Endothelial cell of umbilical vein (primary cell): ENCODE measurements at regions of chrX and their contacts with region 1.

Region 1: GRCh38 chrX:24395775-24396174 is 35.3 kb downstream of the SUPT20HL1 start:
- DNase-seq: peak; percentile 68
- H3K4me3 ChIP-seq: no peak overlapping the region
- H3K27ac ChIP-seq: no peak overlapping the region
- H3K4me1 ChIP-seq: no peaks in the 10 kb centered on the region
- H3K27me3 ChIP-seq: peaks cover 0 to 4% of the 10 kb centered on the region in 2 experiments
- CTCF ChIP-seq: peak; percentile 43 to 46
- POLR2A ChIP-seq: no peak

Region 2: GRCh38 chrX:24498975-24499374 is 103.2 kb after region 1 on chrX:
- CTCF ChIA-PET with region 1: interaction called, 142 read pairs
- POLR2A ChIA-PET with region 1: no interaction called
- dilution Hi-C with region 1: no loop called
- intact Hi-C with region 1: loop called (anchors 1 kb)
- DNase-seq: peak; percentile 21
- H3K4me3 ChIP-seq: no peak overlapping the region
- H3K27ac ChIP-seq: no peak overlapping the region
- H3K4me1 ChIP-seq: peaks cover 12% of the 10 kb centered on the region
- H3K27me3 ChIP-seq: no peaks in the 10 kb centered on the region
- CTCF ChIP-seq: no peak
- POLR2A ChIP-seq: no peak

Region 3: DNA sequence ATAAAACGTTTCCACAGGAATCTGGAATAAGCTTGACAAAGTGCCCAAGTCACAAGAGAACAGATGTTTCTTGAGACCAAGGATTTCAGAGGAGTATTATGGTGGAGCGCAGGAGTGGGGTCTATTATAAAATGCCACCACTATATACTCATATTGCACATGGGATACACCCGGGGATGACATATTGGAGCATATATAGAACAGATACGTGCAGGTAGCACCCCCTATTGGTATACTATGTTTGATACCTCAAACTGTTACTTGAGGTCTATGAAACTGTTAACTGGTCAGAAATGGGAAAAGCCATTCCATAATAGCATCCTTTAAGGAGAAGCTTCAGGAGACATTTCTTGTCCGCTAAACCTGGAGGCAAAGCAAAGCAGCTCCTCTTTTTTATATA is 165.3 kb after region 1 on chrX:
- CTCF ChIA-PET with region 1: interaction called, 29 read pairs
- POLR2A ChIA-PET with region 1: no interaction called
- dilution Hi-C with region 1: no loop called
- intact Hi-C with region 1: loop called (anchors 1 kb)
- DNase-seq: peak; percentile 44
- H3K4me3 ChIP-seq: no peak overlapping the region
- H3K27ac ChIP-seq: no peak overlapping the region
- H3K4me1 ChIP-seq: no peaks in the 10 kb centered on the region
- H3K27me3 ChIP-seq: no peaks in the 10 kb centered on the region
- CTCF ChIP-seq: peak in 1 of 2 donors; percentile 24
- POLR2A ChIP-seq: no peak

Region 4: DNA sequence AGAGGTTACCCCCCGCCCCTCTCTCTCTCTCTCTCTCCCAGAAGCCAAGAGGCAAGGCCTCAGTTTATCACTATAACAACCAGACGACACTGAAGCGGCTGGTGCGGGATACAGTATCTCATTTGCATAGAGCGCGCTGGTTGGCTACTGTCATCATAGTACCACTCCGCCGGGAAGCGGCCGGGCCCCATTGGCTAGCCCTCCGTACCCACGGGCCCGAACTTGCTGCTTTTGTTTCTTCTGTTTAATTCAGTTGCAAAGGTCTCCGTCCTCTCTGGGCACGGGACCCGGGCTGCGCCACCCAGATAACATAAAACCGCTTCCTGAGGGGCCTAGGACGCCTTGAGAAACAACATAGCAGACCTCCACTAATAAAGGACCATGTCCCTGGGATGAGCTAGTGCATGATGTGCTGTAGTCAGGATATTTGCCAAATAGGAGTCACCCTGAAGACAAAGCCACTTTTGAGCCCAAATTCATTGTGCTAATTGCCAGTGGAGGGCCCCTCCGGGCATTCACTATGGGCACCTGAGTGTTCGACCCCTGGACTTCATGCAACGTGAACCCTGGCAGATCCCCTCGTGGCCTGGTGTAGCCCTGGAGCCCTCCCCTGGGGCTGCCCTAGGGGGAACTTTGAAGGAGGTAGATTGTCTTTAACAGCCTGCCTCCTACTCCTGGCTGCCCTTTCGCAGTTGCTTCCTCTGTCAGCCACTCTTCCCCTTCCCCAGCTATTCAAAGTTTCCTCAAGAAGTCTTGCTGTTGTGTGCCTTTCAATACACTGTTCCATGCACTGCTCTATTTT is 251.7 kb after region 1 on chrX and contains the start of gene PCYT1B:
- CTCF ChIA-PET with region 1: no interaction called
- POLR2A ChIA-PET with region 1: no interaction called
- dilution Hi-C with region 1: no loop called
- intact Hi-C with region 1: loop called (anchors 10 kb)
- DNase-seq: peak; percentile 73
- H3K4me3 ChIP-seq: no peak within 1 kb of the TSS
- H3K27ac ChIP-seq: no peak within 1 kb of the TSS
- H3K4me1 ChIP-seq: peaks cover 5% of the 10 kb centered on the region
- H3K27me3 ChIP-seq: peaks cover 0 to 4% of the 10 kb centered on the region in 2 experiments
- CTCF ChIP-seq: no peak
- POLR2A ChIP-seq: no peak
- total RNA-seq, gene PCYT1B: 0.90 and 1.3 TPM in 2 replicates